ENCODE measurements at regions of chr13 and their contacts with region 1.

Region 1: DNA sequence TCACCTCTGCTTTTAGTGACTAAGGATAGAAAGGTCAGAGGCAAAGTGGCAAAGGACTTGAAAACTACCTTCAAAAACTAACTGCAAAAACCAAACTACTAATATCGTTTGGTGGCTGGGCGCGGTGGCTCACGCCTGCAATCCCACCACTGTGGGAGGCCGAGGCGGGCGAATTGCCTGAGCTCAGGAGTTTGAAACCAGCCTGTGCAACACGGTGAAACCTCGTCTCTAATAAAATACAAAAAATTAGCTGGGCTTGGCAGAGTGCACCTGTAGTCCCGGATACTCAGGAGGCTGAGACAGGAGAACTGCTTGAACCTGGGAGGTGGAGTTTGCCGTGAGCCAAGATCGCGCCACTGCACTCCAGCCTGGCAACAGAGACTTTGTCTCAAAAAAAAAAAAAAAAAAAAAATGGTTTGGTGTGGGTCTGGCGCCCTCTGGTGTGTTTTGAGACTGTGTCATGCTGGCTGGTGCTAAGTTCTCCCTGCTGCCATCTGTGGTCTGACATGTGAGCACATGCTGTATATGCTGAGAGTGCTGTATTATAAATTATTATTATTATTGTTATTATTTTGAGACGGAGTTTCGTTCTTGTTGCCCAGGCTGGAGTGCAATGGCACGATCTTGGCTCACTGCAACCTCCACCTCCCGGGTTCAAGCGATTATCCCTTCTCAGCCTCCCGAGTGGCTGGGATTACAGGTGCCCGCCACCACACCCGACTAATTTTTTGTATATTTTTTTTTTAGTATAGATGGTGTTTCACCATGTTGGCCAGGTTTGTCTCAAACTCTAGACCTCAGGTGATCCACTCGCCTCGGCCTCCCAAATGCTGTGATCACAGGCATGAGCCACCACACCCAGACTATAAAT is 36.0 kb upstream of the RNF17 start:
- DNase-seq: peak; percentile 73 to 75
- ATAC-seq: peak; percentile 85
- H3K4me3 ChIP-seq: no peak overlapping the region
- H3K27ac ChIP-seq: no peak overlapping the region
- H3K4me1 ChIP-seq: no peaks in the 10 kb centered on the region
- H3K27me3 ChIP-seq: no peaks in the 10 kb centered on the region

Region 2: DNA sequence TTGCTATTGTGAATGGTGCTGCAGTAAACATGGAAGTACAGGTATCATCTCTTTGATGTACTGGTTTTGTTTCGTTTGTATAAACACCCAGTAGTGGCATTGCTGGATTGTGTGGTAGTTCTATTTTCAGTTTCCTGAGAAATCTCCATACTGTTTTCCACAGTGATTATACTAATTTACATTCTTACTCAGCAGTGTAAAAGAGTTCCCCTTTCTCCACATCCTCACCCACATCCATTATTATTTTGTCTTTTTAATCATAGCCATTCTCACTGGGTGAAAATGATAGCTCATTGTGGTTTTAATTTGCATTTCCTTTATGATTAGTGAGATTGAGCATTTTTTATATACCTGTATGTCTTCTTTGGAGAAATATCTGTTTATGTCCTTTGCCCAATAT is 153.1 kb before region 1 on chr13:
- intact Hi-C with region 1: loop called (anchors 5 to 10 kb)
- DNase-seq: no peak
- ATAC-seq: no peak
- H3K4me3 ChIP-seq: no peak overlapping the region
- H3K27ac ChIP-seq: no peak overlapping the region
- H3K4me1 ChIP-seq: no peaks in the 10 kb centered on the region
- H3K27me3 ChIP-seq: no peaks in the 10 kb centered on the region

Region 3: DNA sequence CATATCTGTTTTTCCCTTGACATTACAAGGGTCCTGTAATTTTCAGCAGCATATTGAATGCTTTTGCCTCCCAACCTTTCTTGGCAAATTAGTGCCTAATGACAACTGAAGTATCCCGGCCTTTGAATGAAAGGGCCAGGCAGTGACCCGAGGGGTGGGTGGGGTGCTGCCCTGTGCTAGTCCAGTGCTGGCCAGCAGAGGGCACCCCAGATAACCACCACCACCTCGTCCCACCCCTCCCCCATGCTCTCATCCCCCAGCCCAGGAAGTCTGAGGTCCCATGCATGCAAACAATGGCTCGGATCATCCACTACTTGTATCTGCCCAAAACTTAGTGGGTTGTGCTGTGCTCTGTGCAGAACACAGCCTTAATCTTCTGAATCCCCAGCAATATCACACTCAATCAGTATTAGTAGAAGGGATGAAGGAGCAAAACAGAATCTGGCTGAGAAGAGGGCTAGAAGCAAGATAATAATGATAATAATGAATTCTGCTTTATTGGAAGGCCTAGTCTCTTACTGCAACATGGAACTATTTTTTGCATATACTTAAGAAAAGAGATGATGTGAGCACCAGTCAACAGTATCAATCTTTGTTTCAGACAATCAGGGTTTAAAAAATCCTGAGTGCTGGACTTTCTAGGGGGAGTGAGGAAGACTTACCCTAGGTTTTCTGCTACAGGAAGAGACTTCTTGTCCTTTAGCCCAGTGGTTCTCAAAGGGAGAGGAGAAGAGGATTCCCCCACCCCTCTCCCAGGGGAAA is 43.9 kb before region 1 on chr13:
- intact Hi-C with region 1: loop called in 1 of 2 experiments (anchors 2 kb)
- DNase-seq: no peak
- ATAC-seq: peak; percentile 84
- H3K4me3 ChIP-seq: no peak overlapping the region
- H3K27ac ChIP-seq: no peak overlapping the region
- H3K4me1 ChIP-seq: peaks cover 0 to 2% of the 10 kb centered on the region in 2 donors
- H3K27me3 ChIP-seq: no peaks in the 10 kb centered on the region

Region 4: DNA sequence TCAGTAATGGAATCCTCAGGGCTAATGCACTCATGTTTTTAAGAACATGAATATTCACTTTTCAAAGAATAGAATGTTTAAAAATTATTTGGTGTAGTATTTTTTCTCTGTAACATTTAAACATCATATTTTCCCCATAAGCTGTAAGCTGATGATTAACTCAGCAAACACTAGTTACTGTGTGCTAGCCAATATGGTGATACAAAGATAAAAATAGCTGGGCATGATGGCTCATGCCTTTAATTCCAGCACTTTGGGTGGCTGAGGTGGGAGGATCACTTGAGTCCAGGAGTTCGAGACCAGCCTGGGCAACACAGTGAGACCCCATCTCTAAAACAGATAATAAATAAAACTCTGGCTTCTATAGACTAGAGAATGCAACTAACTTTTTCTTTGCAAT is 49.2 kb after region 1 on chr13:
- intact Hi-C with region 1: no loop called
- DNase-seq: no peak
- ATAC-seq: no peak
- H3K4me3 ChIP-seq: no peak overlapping the region
- H3K27ac ChIP-seq: no peak overlapping the region
- H3K4me1 ChIP-seq: no peaks in the 10 kb centered on the region
- H3K27me3 ChIP-seq: no peaks in the 10 kb centered on the region

Region 5: GRCh38 chr13:24827799-24828198 is 99.8 kb after region 1 on chr13:
- intact Hi-C with region 1: no loop called
- DNase-seq: no peak
- ATAC-seq: no peak
- H3K4me3 ChIP-seq: no peak overlapping the region
- H3K27ac ChIP-seq: no peak overlapping the region
- H3K4me1 ChIP-seq: no peaks in the 10 kb centered on the region
- H3K27me3 ChIP-seq: no peaks in the 10 kb centered on the region

Measured in aorta (tissue), 5 donors.